HepG2 (cell line): ENCODE measurements at regions of chr2 and their contacts with region 1.

Region 1: DNA sequence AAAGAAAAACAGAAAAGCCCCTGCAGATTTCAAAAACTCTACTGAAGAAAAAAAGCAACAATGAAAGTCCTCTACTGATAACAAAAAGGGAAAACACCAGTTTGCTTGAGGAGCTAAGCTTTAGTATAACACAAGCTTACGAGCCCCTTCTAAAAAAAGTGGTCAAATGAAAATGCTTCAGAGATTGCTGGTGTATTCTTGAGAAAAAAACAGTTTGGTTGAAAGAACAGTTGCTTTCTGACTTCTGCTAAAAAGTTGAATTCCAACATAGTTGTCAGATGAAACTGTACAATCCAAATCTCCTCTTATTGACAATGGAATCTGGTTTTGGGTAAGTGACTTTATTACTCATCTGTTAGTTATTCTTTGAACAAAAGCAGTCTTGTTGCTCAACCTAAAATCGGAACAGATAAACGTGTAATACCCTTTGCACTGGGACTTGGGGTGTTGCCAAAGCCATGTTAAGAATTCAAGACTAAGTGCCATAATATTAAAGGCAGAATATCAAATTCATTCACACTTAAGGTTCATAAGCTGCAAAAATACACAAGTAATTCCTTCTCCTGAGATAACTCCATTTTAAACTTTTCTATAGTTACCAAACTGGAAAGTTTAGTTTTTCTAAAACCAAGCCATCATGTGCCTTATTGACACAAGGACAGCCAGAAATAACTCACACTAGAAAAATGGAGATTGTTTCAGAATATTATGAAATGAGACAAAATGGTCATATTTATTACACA is 45.3 kb upstream of the SPAG16 start:
- DNase-seq: peak; percentile 97
- ATAC-seq: peak; percentile 96
- H3K4me3 ChIP-seq: peak overlapping the region in 2 of 3 experiments; percentile 19 to 32; a peak in 2 of 6 replicates
- H3K27ac ChIP-seq: peak overlapping the region; percentile 46
- H3K4me1 ChIP-seq: peaks cover 28% of the 10 kb centered on the region
- H3K27me3 ChIP-seq: no peaks in the 10 kb centered on the region
- CTCF ChIP-seq: no peak
- EP300 ChIP-seq: peak; percentile 51 to 88; a peak in 2 of 4 replicates
- POLR2A ChIP-seq: no peak
- RAD21 ChIP-seq: no peak

Region 2: DNA sequence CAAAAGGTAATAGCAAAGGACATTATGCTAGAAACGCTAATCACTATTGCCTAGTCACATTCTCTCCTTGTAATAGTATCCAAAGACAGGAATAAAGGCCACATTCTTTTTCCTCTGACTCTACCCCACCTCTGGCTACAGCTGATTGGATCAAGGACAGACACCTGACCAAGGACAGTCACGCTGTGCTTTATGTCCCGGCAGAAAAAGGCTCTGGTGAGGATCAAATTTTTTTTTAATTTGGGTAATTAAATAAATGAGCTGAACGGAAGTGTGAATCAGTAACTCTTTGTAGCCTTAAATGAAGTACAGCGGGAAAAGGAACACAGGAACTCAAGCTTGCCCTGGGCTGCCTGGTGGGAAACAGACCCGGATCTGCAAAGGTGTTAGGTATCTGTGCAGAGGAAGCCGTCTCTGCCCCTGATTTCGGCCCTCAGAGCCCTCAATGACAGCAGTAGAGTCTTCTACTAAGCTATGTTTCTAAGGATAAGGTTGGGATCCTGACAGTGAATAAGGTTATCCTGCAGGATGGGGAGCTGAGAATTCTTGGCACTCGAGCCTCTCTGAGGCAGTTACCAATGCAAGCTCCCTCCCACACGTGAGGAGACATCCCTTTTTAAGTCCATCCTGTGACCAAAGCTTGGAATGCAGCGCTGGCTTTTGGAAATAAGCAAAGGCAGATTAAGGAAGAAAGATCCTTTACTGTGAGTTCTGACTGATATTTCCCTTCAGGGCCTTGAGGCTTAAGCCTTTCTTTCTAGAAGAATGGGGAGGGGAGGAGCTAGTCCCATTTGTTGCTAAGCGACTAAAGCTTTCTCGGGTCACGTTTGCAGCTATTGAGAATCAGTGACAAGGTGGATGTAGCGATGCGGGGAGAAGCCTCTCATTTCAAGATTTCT is 49.7 kb before region 1 on chr2:
- CTCF ChIA-PET with region 1: no interaction called
- POLR2A ChIA-PET with region 1: interaction called, 3 read pairs
- in situ Hi-C with region 1: no loop called
- intact Hi-C with region 1: loop called (anchors 1 kb)
- DNase-seq: peak; percentile 6
- ATAC-seq: peak; percentile 46
- H3K4me3 ChIP-seq: no peak overlapping the region; a peak in 1 of 6 replicates
- H3K27ac ChIP-seq: no peak overlapping the region
- H3K4me1 ChIP-seq: peaks cover 25% of the 10 kb centered on the region
- H3K27me3 ChIP-seq: no peaks in the 10 kb centered on the region
- CTCF ChIP-seq: no peak
- EP300 ChIP-seq: no peak
- POLR2A ChIP-seq: no peak
- RAD21 ChIP-seq: no peak

Region 3: DNA sequence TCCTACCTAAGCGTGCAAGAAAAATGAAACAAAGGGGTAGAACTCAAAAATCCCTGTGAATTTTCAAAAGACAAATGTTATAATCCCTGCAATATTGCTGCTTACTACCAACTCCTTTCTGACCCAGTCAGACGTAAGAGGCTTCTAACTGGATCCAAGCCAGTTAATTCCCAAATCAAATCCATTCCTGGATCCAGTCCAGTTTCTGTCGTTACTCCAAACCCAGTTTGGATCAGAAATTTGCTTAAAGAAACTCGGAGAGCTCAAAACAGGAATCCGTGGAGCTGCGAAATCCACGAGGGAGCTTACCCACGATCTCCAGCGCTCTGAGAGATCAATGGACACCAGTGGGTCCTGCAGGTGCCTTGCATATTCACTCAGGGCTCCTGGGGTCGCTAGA is 24.7 kb before region 1 on chr2:
- CTCF ChIA-PET with region 1: no interaction called
- POLR2A ChIA-PET with region 1: no interaction called
- in situ Hi-C with region 1: no loop called
- intact Hi-C with region 1: no loop called
- DNase-seq: no peak
- ATAC-seq: no peak
- H3K4me3 ChIP-seq: no peak overlapping the region
- H3K27ac ChIP-seq: no peak overlapping the region
- H3K4me1 ChIP-seq: no peaks in the 10 kb centered on the region
- H3K27me3 ChIP-seq: no peaks in the 10 kb centered on the region
- CTCF ChIP-seq: no peak
- EP300 ChIP-seq: no peak
- POLR2A ChIP-seq: no peak
- RAD21 ChIP-seq: no peak

Region 4: GRCh38 chr2:213227458-213227857 is 11.5 kb before region 1 on chr2:
- CTCF ChIA-PET with region 1: no interaction called
- POLR2A ChIA-PET with region 1: no interaction called
- in situ Hi-C with region 1: no loop called
- intact Hi-C with region 1: no loop called
- DNase-seq: no peak
- ATAC-seq: no peak
- H3K4me3 ChIP-seq: no peak overlapping the region
- H3K27ac ChIP-seq: no peak overlapping the region
- H3K4me1 ChIP-seq: no peaks in the 10 kb centered on the region
- H3K27me3 ChIP-seq: 0 out of 5 replicates have a peak, but pooled peaks cover 0 to 5% of the 10 kb centered on the region in 2 experiments
- CTCF ChIP-seq: no peak
- EP300 ChIP-seq: no peak
- POLR2A ChIP-seq: no peak
- RAD21 ChIP-seq: no peak

Region 5: GRCh38 chr2:213284105-213285090 is 45.5 kb after region 1 on chr2 and contains the start of gene SPAG16:
- CTCF ChIA-PET with region 1: no interaction called
- POLR2A ChIA-PET with region 1: no interaction called
- in situ Hi-C with region 1: no loop called
- intact Hi-C with region 1: loop called (anchors 1 kb)
- DNase-seq: peak; percentile 99
- ATAC-seq: peak; percentile 99
- H3K4me3 ChIP-seq: peak within 1 kb of the TSS; percentile 76 to 87 (median 83)
- H3K27ac ChIP-seq: peak within 1 kb of the TSS; percentile 68
- H3K4me1 ChIP-seq: peaks cover 31% of the 10 kb centered on the region
- H3K27me3 ChIP-seq: no peaks in the 10 kb centered on the region; a peak in 1 of 5 replicates
- CTCF ChIP-seq: no peak; the same call in 1 of the 2 replicates
- EP300 ChIP-seq: peak; percentile 37 to 50; a peak in 2 of 4 replicates
- POLR2A ChIP-seq: peak; percentile 82 to 89
- RAD21 ChIP-seq: peak; percentile 57; the same call in 1 of the 2 replicates
- total RNA-seq, gene SPAG16: 22.3 and 26.5 TPM in 2 replicates